B cell (primary cell): ENCODE measurements at regions of chr6 and their contacts with region 1.

Region 1: DNA sequence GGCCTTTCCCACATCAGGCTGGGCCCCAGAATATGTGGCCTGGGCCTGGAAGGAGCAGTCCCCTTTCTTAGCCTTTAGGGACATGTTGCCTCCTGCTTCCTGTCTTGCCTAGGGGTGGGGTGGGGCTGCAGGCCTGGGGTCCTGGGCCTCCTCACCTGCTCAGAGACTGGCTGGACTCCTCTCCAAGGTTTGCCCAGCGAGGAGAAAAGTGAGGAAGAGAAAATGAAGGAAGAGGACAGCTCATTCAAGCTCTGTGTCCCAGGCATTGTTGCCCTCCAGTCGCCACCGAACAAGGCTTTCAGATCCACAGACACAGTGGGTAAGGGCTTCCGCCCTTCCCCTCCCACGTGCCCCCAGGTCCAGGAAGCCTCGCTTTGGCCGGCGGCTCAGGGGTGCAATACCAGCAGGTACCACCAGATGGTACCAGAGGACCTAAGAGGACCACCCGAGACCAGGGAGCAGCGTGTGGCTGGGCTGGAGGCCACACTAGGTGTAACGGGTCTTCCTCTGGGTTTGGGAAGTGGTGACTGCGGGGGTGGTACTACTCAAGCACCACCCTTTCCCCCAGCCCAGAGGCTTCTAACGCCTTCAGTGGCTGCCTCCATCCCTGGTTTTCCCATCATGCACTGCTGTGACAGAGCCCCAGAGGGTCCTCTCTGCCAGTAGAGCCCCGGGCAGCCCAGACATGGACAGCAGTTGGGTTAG is 5.5 kb upstream of the BAK1 start:
- DNase-seq: peak; percentile 93
- ATAC-seq: peak; percentile 94
- H3K4me3 ChIP-seq: peak overlapping the region in 2 of 5 experiments; percentile 12 to 17
- H3K4me3 Mint-ChIP-seq: peak overlapping the region; percentile 61
- H3K27ac ChIP-seq: peak overlapping the region; percentile 46 to 60
- H3K27ac Mint-ChIP-seq: peak overlapping the region; percentile 91
- H3K4me1 ChIP-seq: peaks cover 24 to 34% of the 10 kb centered on the region in 2 donors
- H3K4me1 Mint-ChIP-seq: peaks cover 34% of the 10 kb centered on the region
- H3K27me3 ChIP-seq: no peaks in the 10 kb centered on the region
- H3K27me3 Mint-ChIP-seq: no peaks in the 10 kb centered on the region
- CTCF ChIP-seq: peak; percentile 99

Region 2: DNA sequence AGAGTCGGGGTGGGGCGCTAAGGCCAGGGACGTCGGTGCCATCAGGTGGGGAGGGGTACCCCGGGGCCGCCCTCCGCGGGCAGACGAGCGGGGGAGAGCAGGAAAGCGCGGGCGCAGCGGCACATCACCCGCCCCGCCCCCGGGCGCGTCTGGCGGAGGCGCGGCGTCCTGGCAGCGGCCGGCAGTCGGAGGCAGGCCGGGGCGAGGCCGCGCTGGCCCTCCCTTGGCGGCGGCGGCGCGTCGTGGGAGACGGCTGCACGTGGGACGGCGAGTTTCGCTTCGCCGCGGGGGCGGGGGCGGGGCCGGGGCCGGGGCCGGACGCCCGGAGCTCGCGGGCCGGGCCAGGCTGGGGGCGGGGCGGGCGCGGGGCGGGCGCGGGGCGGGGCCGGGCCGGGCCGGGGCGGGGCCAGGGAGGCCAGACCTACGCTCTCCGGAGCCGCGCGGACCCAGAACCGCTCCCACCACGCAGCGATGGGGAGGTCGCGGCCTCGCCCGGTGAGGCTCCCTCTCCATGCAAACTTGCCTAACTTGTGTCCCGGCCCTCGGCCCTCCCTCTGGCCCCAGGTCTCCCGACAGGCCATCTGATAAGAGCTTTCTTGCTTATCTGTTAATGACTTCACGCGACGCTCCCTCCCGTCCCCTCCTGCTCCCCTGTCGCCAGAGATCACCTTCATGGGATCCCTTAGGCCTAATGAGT is 48.1 kb after region 1 on chr6:
- CTCF ChIA-PET with region 1: interaction called, 10 read pairs
- POLR2A ChIA-PET with region 1: no interaction called
- intact Hi-C with region 1: loop called (anchors 2 kb)
- DNase-seq: peak; percentile 79
- ATAC-seq: peak; percentile 92
- H3K4me3 ChIP-seq: peak overlapping the region in 4 of 5 experiments; percentile 25 to 58 (median 53)
- H3K4me3 Mint-ChIP-seq: peak overlapping the region; percentile 94
- H3K27ac ChIP-seq: peak overlapping the region in 1 of 2 donors; percentile 33
- H3K27ac Mint-ChIP-seq: peak overlapping the region; percentile 85
- H3K4me1 ChIP-seq: peaks cover 17 to 29% of the 10 kb centered on the region in 2 donors
- H3K4me1 Mint-ChIP-seq: peaks cover 50% of the 10 kb centered on the region
- H3K27me3 ChIP-seq: no peaks in the 10 kb centered on the region
- H3K27me3 Mint-ChIP-seq: no peaks in the 10 kb centered on the region
- CTCF ChIP-seq: no peak

Region 3: GRCh38 chr6:33694401-33694931 is 108.9 kb after region 1 on chr6:
- CTCF ChIA-PET with region 1: interaction called, 15 read pairs
- POLR2A ChIA-PET with region 1: no interaction called
- intact Hi-C with region 1: no loop called
- DNase-seq: peak; percentile 50
- ATAC-seq: peak; percentile 14
- H3K4me3 ChIP-seq: no peak overlapping the region
- H3K4me3 Mint-ChIP-seq: peak overlapping the region; percentile 70
- H3K27ac ChIP-seq: peak overlapping the region; percentile 59 to 91
- H3K27ac Mint-ChIP-seq: peak overlapping the region; percentile 93
- H3K4me1 ChIP-seq: peaks cover 73 to 78% of the 10 kb centered on the region in 2 donors
- H3K4me1 Mint-ChIP-seq: peaks cover 70% of the 10 kb centered on the region
- H3K27me3 ChIP-seq: no peaks in the 10 kb centered on the region
- H3K27me3 Mint-ChIP-seq: no peaks in the 10 kb centered on the region
- CTCF ChIP-seq: no peak

Region 4: GRCh38 chr6:33711140-33712129 is 125.9 kb after region 1 on chr6 and contains the start of gene UQCC2:
- CTCF ChIA-PET with region 1: interaction called, 13 read pairs
- POLR2A ChIA-PET with region 1: interaction called, 4 read pairs
- intact Hi-C with region 1: no loop called
- DNase-seq: peak; percentile 99
- ATAC-seq: peak; percentile 87
- H3K4me3 ChIP-seq: peak within 1 kb of the TSS; percentile 62 to 96 (median 93)
- H3K4me3 Mint-ChIP-seq: peak within 1 kb of the TSS; percentile 87
- H3K27ac ChIP-seq: peak within 1 kb of the TSS; percentile 83 to 88
- H3K27ac Mint-ChIP-seq: peak within 1 kb of the TSS; percentile 93
- H3K4me1 ChIP-seq: peaks cover 16 to 28% of the 10 kb centered on the region in 2 donors
- H3K4me1 Mint-ChIP-seq: peaks cover 33% of the 10 kb centered on the region
- H3K27me3 ChIP-seq: no peaks in the 10 kb centered on the region
- H3K27me3 Mint-ChIP-seq: no peaks in the 10 kb centered on the region
- CTCF ChIP-seq: peak; percentile 44
- total RNA-seq, gene UQCC2: 16.6 and 17.1 TPM in 2 replicates

Region 5: DNA sequence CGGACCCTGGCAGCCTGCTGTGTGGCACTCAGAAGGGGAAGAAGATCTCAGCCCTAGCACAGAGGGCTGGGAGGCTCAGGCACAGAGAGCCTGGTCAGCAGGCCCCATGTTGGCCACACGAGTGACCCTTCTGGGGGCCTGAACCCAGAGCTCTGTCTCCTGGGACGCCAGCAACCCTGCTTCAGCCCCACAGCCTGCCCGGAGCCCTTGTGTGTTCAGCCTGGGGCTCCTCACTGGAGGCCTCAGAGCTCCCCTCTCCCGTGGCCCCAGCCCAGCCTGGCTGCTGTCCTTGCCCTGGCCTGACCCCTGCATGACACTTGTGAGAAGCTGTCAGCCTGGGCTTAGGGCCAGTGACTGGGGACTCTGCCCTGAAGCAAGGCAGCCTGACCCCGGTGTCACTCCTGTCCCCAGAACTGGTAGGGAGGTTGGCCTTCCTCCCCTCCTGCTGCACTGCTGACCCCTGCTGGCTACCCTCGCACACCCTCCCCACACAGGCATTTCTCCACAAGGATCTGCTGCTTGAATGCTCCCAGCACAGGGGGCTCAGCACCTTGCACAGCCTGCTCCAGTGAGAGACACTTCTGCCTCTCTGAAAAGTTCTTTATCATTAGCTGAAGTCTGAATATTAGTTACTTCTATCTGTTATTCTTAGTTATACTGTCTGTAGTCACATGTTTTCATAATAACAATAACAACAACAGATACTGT is 176.5 kb after region 1 on chr6:
- CTCF ChIA-PET with region 1: interaction called, 16 read pairs
- POLR2A ChIA-PET with region 1: no interaction called
- intact Hi-C with region 1: loop called (anchors 1 kb)
- DNase-seq: peak; percentile 52
- ATAC-seq: no peak
- H3K4me3 ChIP-seq: no peak overlapping the region
- H3K4me3 Mint-ChIP-seq: no peak overlapping the region
- H3K27ac ChIP-seq: no peak overlapping the region
- H3K27ac Mint-ChIP-seq: no peak overlapping the region
- H3K4me1 ChIP-seq: no peaks in the 10 kb centered on the region
- H3K4me1 Mint-ChIP-seq: peaks cover 3% of the 10 kb centered on the region
- H3K27me3 ChIP-seq: peaks cover 0 to 4% (median 0%) of the 10 kb centered on the region in 4 experiments
- H3K27me3 Mint-ChIP-seq: peaks cover 39% of the 10 kb centered on the region
- CTCF ChIP-seq: no peak

Region 6: DNA sequence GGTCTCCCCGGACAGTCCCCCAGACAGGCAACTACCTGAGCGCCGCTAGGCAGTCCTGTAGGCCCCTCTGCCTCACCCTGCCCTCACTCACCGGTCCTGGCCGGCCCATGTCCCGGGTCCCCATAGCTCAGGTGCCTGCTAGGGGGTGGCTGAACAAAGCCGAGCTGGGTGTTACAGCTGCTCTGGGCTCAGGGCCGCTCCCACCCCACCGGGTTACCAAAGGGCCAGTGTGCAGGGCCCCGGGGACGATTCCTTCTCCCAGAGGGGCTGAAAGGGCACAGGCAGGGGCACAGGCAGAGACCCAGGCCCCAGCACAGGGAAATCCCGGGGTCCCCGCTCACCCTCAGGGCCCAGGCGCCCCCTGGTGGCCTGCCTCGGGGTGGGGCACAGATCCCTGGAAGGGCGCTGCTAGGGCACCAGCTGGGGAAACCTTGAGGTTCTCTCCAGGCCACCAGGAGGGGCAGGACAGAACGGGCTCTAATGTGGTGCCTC is 441.9 kb after region 1 on chr6:
- CTCF ChIA-PET with region 1: interaction called, 10 read pairs
- POLR2A ChIA-PET with region 1: no interaction called
- intact Hi-C with region 1: no loop called
- DNase-seq: peak; percentile 67
- ATAC-seq: peak; percentile 70
- H3K4me3 ChIP-seq: no peak overlapping the region
- H3K4me3 Mint-ChIP-seq: no peak overlapping the region
- H3K27ac ChIP-seq: no peak overlapping the region
- H3K27ac Mint-ChIP-seq: no peak overlapping the region
- H3K4me1 ChIP-seq: peaks cover 0 to 6% of the 10 kb centered on the region in 2 donors
- H3K4me1 Mint-ChIP-seq: peaks cover 4% of the 10 kb centered on the region
- H3K27me3 ChIP-seq: peaks cover 0 to 5% (median 0%) of the 10 kb centered on the region in 4 experiments
- H3K27me3 Mint-ChIP-seq: peaks cover 12% of the 10 kb centered on the region
- CTCF ChIP-seq: peak; percentile 78